ENCODE measurements at regions of chr6 and their contacts with region 1.

Region 1: DNA sequence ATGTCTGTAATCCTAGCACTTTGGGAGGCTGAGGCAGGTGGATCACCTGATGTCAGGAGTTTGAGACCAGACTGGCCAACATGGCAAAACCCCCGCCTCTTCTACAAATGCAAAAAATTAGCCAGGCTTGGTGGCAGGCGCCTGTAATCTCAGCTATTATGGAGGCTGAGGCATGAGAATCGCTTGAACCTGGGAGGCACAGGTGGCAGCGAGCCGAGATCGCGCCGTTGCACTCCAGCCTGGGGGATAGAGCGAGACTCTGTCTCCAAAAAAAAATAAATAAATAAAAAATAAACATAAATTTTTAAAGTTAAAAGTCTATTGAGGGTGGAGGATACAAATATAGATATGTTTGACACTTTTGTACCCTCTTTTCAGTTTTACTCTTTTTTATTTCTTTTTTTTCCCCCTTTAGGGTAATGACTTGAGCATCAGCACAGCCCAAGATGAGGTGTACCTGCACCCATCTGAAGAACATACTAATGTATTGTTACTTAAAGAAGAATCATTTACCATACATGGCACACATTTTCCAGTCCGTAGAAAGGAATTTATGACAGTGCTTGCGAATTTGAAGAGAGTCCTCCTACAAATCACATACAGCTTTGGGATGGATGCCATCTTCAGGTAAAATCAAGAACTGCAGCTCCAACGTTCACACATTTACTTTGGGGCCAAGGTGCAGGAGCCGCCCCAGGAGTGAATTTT is 368.9 kb downstream of the LAMA2 start:
- DNase-seq: peak; percentile 42 to 64
- H3K4me3 ChIP-seq: no peak overlapping the region
- H3K27ac ChIP-seq: no peak overlapping the region
- H3K4me1 ChIP-seq: 0 out of 2 replicates have a peak, but pooled peaks cover 8% of the 10 kb centered on the region
- H3K27me3 ChIP-seq: no peaks in the 10 kb centered on the region
- CTCF ChIP-seq: peak; percentile 95

Region 2: GRCh38 chr6:127737009-127737486 is 1514.8 kb before region 1 on chr6:
- CTCF ChIA-PET with region 1: no interaction called
- POLR2A ChIA-PET with region 1: no interaction called
- intact Hi-C with region 1: loop called (anchors 5 kb)
- DNase-seq: peak; percentile 40 to 56
- H3K4me3 ChIP-seq: no peak overlapping the region
- H3K27ac ChIP-seq: no peak overlapping the region
- H3K4me1 ChIP-seq: no peaks in the 10 kb centered on the region
- H3K27me3 ChIP-seq: no peaks in the 10 kb centered on the region
- CTCF ChIP-seq: peak; percentile 92

Region 3: DNA sequence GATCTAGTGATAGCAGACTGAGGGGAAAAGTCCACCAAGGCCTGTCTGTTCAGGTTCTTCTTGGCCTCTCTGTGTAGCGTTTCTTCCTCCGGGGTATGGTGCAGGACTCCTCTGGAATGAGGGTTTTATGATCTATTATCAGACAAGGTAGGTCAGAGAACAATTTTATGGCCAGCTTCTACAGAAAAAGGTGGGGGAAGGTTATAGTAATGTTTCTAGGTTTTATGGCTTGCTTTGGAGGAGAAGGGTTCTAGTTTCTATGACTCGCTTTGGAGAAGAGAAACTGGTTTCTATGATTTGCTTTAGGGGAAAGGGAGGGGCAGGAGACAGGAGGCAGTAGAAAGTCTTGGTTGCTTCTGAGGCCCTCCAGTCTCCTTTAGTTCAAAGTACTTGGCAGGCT is 513.7 kb before region 1 on chr6:
- CTCF ChIA-PET with region 1: interaction called, 4 read pairs
- POLR2A ChIA-PET with region 1: no interaction called
- intact Hi-C with region 1: loop called (anchors 5 kb)
- DNase-seq: no peak
- H3K4me3 ChIP-seq: no peak overlapping the region
- H3K27ac ChIP-seq: peak overlapping the region; percentile 7; the same call in 1 of the 2 replicates
- H3K4me1 ChIP-seq: peaks cover 20% of the 10 kb centered on the region; the same call in 1 of the 2 replicates
- H3K27me3 ChIP-seq: no peaks in the 10 kb centered on the region
- CTCF ChIP-seq: no peak

Measured in PC-9 (cell line).